Activated naive CD4-positive, alpha-beta T cell treated with anti-CD3 and anti-CD28 coated beads for 36 hours (primary cell): ENCODE measurements at regions of chr12 and their contacts with region 1.

Region 1: DNA sequence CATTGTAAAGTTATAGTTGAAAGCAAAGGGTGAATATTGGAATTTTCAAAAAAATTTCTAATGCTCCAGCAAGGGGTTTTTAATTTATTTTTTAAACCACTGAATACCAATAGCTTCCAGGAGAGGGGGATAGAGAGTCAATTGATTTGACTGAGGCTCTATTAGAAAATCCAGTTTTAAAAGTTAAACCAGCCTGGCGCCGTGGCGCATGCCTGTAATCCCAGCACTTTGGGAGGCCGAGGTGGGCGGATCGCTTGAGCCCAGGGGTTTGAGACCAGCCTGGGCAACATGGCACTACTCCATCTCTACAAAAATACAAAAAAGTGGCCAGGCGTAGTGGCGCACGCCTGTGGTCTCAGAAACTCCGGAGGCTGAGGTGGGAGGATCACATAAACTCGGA is 150.1 kb downstream of the SLC38A4 start:
- DNase-seq: no peak
- H3K4me3 Mint-ChIP-seq: no peak overlapping the region
- H3K27ac Mint-ChIP-seq: no peak overlapping the region
- H3K4me1 Mint-ChIP-seq: peaks cover 7% of the 10 kb centered on the region
- H3K27me3 Mint-ChIP-seq: no peaks in the 10 kb centered on the region

Region 2: DNA sequence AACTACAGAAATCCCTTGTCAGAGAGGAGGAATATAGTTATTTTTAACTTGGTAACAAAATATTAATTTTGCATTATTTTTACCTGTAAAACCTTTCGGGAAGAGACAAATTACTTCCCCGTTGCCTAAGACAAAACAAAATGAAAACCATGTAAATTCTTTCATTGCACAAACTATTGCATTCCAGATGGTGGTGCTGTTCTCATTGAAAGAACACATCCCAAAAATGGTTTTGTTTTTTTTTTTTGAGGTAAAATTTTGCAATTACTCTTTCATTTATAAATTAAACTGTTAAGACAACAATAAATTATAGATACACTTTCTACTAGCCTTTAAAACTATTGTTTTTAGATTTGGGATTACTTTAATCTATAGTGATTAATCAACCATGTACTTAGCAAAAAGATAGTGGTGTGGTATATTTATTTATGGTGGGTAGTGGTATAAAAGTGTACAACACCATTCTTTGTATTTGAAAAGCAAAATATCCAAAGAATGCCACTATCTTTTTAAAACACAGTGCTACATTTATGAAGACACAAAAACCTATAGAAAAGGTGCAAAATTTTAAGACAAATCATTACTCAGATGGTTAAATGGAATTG is 522.4 kb before region 1 on chr12:
- CTCF ChIA-PET with region 1: interaction called, 4 read pairs
- intact Hi-C with region 1: loop called (anchors 2 kb)
- DNase-seq: no peak
- H3K4me3 Mint-ChIP-seq: no peak overlapping the region
- H3K27ac Mint-ChIP-seq: no peak overlapping the region
- H3K4me1 Mint-ChIP-seq: peaks cover 12% of the 10 kb centered on the region
- H3K27me3 Mint-ChIP-seq: peaks cover under 1% of the 10 kb centered on the region

Region 3: GRCh38 chr12:46342562-46343033 is 333.1 kb before region 1 on chr12:
- CTCF ChIA-PET with region 1: interaction called, 5 read pairs
- intact Hi-C with region 1: loop called (anchors 2 kb)
- DNase-seq: peak; percentile 48
- H3K4me3 Mint-ChIP-seq: no peak overlapping the region
- H3K27ac Mint-ChIP-seq: no peak overlapping the region
- H3K4me1 Mint-ChIP-seq: peaks cover 5% of the 10 kb centered on the region
- H3K27me3 Mint-ChIP-seq: no peaks in the 10 kb centered on the region

Region 4: GRCh38 chr12:46933947-46934346 is 258.2 kb after region 1 on chr12:
- CTCF ChIA-PET with region 1: interaction called, 5 read pairs
- intact Hi-C with region 1: loop called (anchors 1 kb)
- DNase-seq: no peak
- H3K4me3 Mint-ChIP-seq: no peak overlapping the region
- H3K27ac Mint-ChIP-seq: no peak overlapping the region
- H3K4me1 Mint-ChIP-seq: no peaks in the 10 kb centered on the region
- H3K27me3 Mint-ChIP-seq: peaks cover 8% of the 10 kb centered on the region

Region 5: GRCh38 chr12:46983393-46984266 is 307.9 kb after region 1 on chr12:
- CTCF ChIA-PET with region 1: interaction called, 3 read pairs
- intact Hi-C with region 1: loop called (anchors 1 kb)
- DNase-seq: peak; percentile 55
- H3K4me3 Mint-ChIP-seq: no peak overlapping the region
- H3K27ac Mint-ChIP-seq: no peak overlapping the region
- H3K4me1 Mint-ChIP-seq: peaks cover 9% of the 10 kb centered on the region
- H3K27me3 Mint-ChIP-seq: peaks cover 5% of the 10 kb centered on the region

Region 6: DNA sequence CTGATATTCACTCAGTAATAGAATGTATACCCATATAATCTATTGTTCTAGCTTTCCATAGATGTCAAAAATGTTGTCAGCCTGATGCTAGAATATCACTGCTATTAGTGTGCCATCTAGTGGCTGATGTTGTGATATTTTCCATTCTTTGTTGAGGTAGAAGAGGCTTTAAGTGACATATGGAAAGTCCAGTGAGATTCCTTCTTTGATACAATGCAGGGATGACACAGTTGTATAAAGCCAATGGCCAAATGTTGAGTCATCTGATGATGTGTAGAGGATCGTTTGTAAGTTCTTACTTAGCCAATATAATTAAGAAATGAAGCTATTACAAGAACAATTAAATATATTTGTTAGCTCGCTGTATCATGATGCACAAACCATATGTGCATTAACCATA is 345.6 kb after region 1 on chr12:
- CTCF ChIA-PET with region 1: interaction called, 7 read pairs
- intact Hi-C with region 1: loop called (anchors 1 kb)
- DNase-seq: no peak
- H3K4me3 Mint-ChIP-seq: no peak overlapping the region
- H3K27ac Mint-ChIP-seq: no peak overlapping the region
- H3K4me1 Mint-ChIP-seq: no peaks in the 10 kb centered on the region
- H3K27me3 Mint-ChIP-seq: no peaks in the 10 kb centered on the region